CD14-positive monocyte (primary cell): ENCODE measurements at regions of chr15 and their contacts with region 1.

Region 1: GRCh38 chr15:96889734-96890480 is 559.4 kb downstream of the NR2F2 start:
- DNase-seq: no peak
- H3K4me3 ChIP-seq: no peak overlapping the region
- H3K4me3 Mint-ChIP-seq: no peak overlapping the region
- H3K27ac ChIP-seq: no peak overlapping the region
- H3K27ac Mint-ChIP-seq: no peak overlapping the region
- H3K4me1 ChIP-seq: no peaks in the 10 kb centered on the region
- H3K4me1 Mint-ChIP-seq: peaks cover 2% of the 10 kb centered on the region
- H3K27me3 ChIP-seq: peaks cover 0 to 4% of the 10 kb centered on the region in 2 donors
- H3K27me3 Mint-ChIP-seq: no peaks in the 10 kb centered on the region
- CTCF ChIP-seq: no peak

Region 2: DNA sequence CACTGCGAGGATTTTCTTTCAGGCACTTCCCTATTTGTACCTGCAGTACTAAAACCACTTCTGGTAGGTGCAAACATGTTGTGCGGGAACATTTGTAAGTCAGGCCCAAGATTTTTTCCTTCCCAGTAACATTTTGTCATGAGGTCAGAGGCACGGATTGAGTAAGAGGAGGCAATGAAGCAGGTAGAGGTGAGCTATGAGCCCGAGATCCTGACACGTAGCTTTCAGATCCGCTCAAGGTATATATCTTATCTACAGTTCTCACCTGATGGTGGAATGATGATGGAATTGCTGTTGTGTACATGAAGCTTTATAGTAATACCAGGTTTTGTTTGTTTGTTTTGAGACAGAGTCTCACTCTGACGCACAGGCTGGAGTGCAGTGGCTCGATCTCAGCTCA is 61.9 kb before region 1 on chr15:
- intact Hi-C with region 1: loop called in 1 of 2 experiments (anchors 10 kb)
- DNase-seq: no peak
- H3K4me3 ChIP-seq: no peak overlapping the region
- H3K4me3 Mint-ChIP-seq: no peak overlapping the region
- H3K27ac ChIP-seq: no peak overlapping the region
- H3K27ac Mint-ChIP-seq: no peak overlapping the region
- H3K4me1 ChIP-seq: no peaks in the 10 kb centered on the region
- H3K4me1 Mint-ChIP-seq: no peaks in the 10 kb centered on the region
- H3K27me3 ChIP-seq: no peaks in the 10 kb centered on the region
- H3K27me3 Mint-ChIP-seq: peaks cover 0 to 5% (median 0%) of the 10 kb centered on the region in 3 donors
- CTCF ChIP-seq: no peak

Region 3: GRCh38 chr15:96838081-96838480 is 51.8 kb before region 1 on chr15:
- intact Hi-C with region 1: no loop called
- DNase-seq: no peak
- H3K4me3 ChIP-seq: no peak overlapping the region
- H3K4me3 Mint-ChIP-seq: no peak overlapping the region
- H3K27ac ChIP-seq: no peak overlapping the region
- H3K27ac Mint-ChIP-seq: no peak overlapping the region
- H3K4me1 ChIP-seq: no peaks in the 10 kb centered on the region
- H3K4me1 Mint-ChIP-seq: no peaks in the 10 kb centered on the region
- H3K27me3 ChIP-seq: no peaks in the 10 kb centered on the region
- H3K27me3 Mint-ChIP-seq: no peaks in the 10 kb centered on the region
- CTCF ChIP-seq: no peak

Region 4: GRCh38 chr15:97525809-97526208 is 635.9 kb after region 1 on chr15:
- intact Hi-C with region 1: no loop called
- DNase-seq: no peak
- H3K4me3 ChIP-seq: no peak overlapping the region
- H3K4me3 Mint-ChIP-seq: no peak overlapping the region
- H3K27ac ChIP-seq: no peak overlapping the region
- H3K27ac Mint-ChIP-seq: no peak overlapping the region
- H3K4me1 ChIP-seq: no peaks in the 10 kb centered on the region
- H3K4me1 Mint-ChIP-seq: peaks cover 5% of the 10 kb centered on the region
- H3K27me3 ChIP-seq: no peaks in the 10 kb centered on the region
- H3K27me3 Mint-ChIP-seq: peaks cover 1 to 3% (median 2%) of the 10 kb centered on the region in 3 donors
- CTCF ChIP-seq: no peak